ENCODE measurements at regions of chr5 and their contacts with region 1.

Region 1: GRCh38 chr5:54229041-54229780 is 81.2 kb downstream of the ARL15 start:
- DNase-seq: peak; percentile 77
- H3K4me3 Mint-ChIP-seq: no peak overlapping the region
- H3K27ac Mint-ChIP-seq: no peak overlapping the region
- H3K4me1 Mint-ChIP-seq: no peaks in the 10 kb centered on the region
- H3K27me3 Mint-ChIP-seq: no peaks in the 10 kb centered on the region
- CTCF ChIP-seq: peak; percentile 84

Region 2: DNA sequence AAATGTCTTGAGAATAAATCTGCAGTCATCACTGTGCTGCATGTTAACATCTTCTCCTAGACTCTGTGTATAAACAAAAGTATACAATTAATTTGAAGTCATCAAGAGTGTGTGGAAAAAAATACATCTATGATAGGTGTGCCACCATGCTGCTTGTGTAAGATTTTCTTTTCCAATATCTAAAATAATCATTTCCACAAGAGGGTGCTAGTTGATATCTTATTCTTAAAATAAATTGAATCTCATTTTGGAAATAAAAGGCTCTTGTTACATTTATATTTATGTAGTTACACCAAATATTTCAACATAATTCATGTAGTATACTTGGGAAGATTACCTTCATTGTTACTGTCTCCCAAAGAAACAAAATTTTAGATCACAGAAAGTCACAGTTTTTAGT is 1105.5 kb before region 1 on chr5:
- CTCF ChIA-PET with region 1: no interaction called
- intact Hi-C with region 1: loop called (anchors 2 kb)
- DNase-seq: no peak
- H3K4me3 Mint-ChIP-seq: no peak overlapping the region
- H3K27ac Mint-ChIP-seq: no peak overlapping the region
- H3K4me1 Mint-ChIP-seq: no peaks in the 10 kb centered on the region
- H3K27me3 Mint-ChIP-seq: no peaks in the 10 kb centered on the region
- CTCF ChIP-seq: no peak

Region 3: DNA sequence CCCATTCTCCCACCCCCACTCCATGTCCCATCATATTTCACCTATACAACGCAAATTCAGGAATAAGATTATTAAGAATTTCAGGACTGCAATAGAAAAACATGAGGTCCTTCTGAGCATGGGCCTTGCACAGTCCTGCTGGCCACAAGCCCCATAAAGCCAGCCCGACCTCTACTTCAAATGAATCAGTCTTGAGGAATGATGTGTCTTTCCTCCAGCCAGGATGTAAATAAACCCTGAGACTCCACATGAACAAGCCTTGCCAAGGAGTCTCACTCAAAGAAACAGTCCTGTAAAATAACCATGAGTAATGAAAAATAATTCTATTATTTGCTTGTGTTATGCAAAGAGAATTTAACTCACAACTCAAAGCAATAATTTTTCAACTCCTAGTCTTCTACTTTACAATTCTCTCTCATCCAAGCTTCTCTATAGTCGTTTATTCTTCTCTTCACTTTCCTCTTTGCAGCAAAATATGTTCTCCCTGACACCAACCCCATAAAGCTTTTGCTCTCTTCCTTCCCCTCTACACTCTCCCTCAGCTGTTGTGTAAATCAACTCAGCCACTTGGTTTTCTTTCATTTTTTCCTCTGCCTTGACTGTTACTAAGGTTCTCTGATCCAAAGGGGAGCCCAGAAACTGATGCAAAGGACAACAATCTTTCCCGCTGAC is 979.5 kb before region 1 on chr5:
- CTCF ChIA-PET with region 1: no interaction called
- intact Hi-C with region 1: loop called (anchors 10 kb)
- DNase-seq: no peak
- H3K4me3 Mint-ChIP-seq: no peak overlapping the region
- H3K27ac Mint-ChIP-seq: no peak overlapping the region
- H3K4me1 Mint-ChIP-seq: peaks cover 9% of the 10 kb centered on the region
- H3K27me3 Mint-ChIP-seq: no peaks in the 10 kb centered on the region
- CTCF ChIP-seq: no peak

Region 4: DNA sequence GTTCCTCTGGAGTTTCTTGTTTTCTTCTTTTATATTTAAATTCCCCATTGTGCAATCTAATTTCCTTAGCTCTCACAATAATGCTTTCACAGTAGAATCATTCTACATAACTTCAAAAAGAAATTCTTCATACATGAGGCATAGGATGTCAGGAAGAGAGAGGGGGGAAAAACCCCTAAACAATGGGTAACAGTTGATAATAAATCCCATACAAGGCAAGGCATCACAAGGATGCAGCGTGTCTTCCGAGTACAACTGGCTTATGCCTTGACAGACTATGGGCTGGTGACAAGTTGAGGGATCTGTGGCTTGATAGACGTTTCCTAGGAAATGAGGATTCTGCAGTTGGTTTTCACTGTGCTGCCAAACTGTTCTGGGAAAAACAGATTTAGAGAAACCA is 166.3 kb before region 1 on chr5:
- CTCF ChIA-PET with region 1: no interaction called
- intact Hi-C with region 1: no loop called
- DNase-seq: no peak
- H3K4me3 Mint-ChIP-seq: no peak overlapping the region
- H3K27ac Mint-ChIP-seq: no peak overlapping the region
- H3K4me1 Mint-ChIP-seq: no peaks in the 10 kb centered on the region
- H3K27me3 Mint-ChIP-seq: no peaks in the 10 kb centered on the region
- CTCF ChIP-seq: no peak